ENCODE measurements at regions of chr22 and their contacts with region 1.

Region 1: DNA sequence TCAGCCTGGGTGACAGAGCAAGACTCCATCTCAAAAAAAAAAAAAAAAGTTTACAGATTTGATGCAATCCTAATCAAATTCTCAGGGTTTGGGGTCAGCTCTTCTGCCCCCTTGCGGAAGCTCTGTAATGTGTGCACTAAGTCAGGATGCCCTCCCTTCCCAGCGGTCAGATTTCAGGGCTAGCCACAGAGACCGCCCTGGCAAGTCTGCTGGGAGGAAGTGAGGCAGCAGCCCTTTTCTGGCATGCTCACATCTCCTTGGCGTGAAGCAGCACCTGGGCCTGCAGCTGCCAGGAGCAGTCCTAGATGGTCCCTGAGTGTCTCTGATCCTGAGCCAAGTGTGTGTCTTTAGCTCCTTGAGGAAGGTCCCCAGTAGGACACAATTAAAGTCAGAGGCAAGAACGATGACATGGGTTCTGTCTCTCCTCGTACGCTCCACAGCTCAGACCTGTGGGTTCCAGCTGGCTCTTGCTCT is 10.9 kb upstream of the APOBEC3C start:
- DNase-seq: peak; percentile 88
- ATAC-seq: peak; percentile 96
- H3K4me3 Mint-ChIP-seq: no peak overlapping the region
- H3K27ac Mint-ChIP-seq: no peak overlapping the region
- H3K4me1 Mint-ChIP-seq: peaks cover 6% of the 10 kb centered on the region
- H3K27me3 Mint-ChIP-seq: no peaks in the 10 kb centered on the region

Region 2: GRCh38 chr22:37972527-37972926 is 1030.7 kb before region 1 on chr22:
- CTCF ChIA-PET with region 1: no interaction called
- POLR2A ChIA-PET with region 1: interaction called, 10 read pairs
- intact Hi-C with region 1: no loop called
- DNase-seq: no peak
- ATAC-seq: no peak
- H3K4me3 Mint-ChIP-seq: no peak overlapping the region
- H3K27ac Mint-ChIP-seq: no peak overlapping the region
- H3K4me1 Mint-ChIP-seq: no peaks in the 10 kb centered on the region
- H3K27me3 Mint-ChIP-seq: no peaks in the 10 kb centered on the region

Region 3: GRCh38 chr22:38927033-38927781 is 76.0 kb before region 1 on chr22:
- CTCF ChIA-PET with region 1: interaction called, 7 read pairs
- POLR2A ChIA-PET with region 1: no interaction called
- intact Hi-C with region 1: loop called in 1 of 2 experiments (anchors 1 kb)
- DNase-seq: peak; percentile 78
- ATAC-seq: peak; percentile 86
- H3K4me3 Mint-ChIP-seq: peak overlapping the region; percentile 14
- H3K27ac Mint-ChIP-seq: no peak overlapping the region
- H3K4me1 Mint-ChIP-seq: peaks cover 3% of the 10 kb centered on the region
- H3K27me3 Mint-ChIP-seq: peaks cover 38% of the 10 kb centered on the region

Region 4: GRCh38 chr22:38981992-38982927 is 20.9 kb before region 1 on chr22 and contains the start of gene APOBEC3B:
- CTCF ChIA-PET with region 1: interaction called, 8 read pairs
- POLR2A ChIA-PET with region 1: no interaction called
- intact Hi-C with region 1: loop called in 1 of 2 experiments (anchors 1 kb)
- DNase-seq: peak; percentile 82
- ATAC-seq: peak; percentile 57
- H3K4me3 Mint-ChIP-seq: peak within 1 kb of the TSS; percentile 55
- H3K27ac Mint-ChIP-seq: peak within 1 kb of the TSS; percentile 74
- H3K4me1 Mint-ChIP-seq: peaks cover 53% of the 10 kb centered on the region
- H3K27me3 Mint-ChIP-seq: peaks cover 3% of the 10 kb centered on the region
- total RNA-seq, gene APOBEC3B: 8.0 to 8.5 TPM

Region 5: DNA sequence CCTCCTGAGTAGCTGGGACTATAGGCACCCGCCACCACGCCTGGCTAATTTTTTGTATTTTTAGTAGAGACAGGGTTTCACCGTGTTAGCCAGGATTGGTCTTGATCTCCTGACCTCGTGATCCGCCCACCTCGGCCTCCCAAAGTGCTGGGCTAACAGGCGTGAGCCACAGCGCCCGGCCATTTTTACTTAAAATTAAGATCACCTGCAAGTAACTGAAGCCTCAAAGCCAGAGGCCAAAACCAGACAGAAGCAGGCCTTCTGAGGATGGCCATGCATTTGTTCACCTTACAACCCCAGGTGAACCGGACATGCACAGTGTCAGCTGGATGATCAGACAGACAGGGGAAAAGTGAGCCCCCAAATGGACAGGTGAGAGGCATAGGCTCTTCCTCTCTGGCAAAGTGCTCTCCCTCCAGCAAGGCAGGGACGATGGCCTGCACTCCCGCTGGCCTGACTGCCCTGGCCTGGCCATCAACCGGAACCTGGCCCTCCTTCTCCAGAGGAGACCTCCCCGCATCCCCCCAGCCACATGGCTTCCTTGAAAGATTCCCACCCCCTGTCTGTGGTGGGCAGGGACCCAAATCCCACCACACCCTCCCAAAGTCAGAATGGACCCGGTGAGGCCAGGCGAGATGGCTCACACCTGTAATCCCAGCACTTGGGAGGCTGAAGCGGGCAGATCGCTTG is 119.7 kb after region 1 on chr22:
- CTCF ChIA-PET with region 1: interaction called, 4 read pairs
- POLR2A ChIA-PET with region 1: no interaction called
- intact Hi-C with region 1: loop called (anchors 1 kb)
- DNase-seq: no peak
- ATAC-seq: no peak
- H3K4me3 Mint-ChIP-seq: no peak overlapping the region
- H3K27ac Mint-ChIP-seq: no peak overlapping the region
- H3K4me1 Mint-ChIP-seq: peaks cover 14% of the 10 kb centered on the region
- H3K27me3 Mint-ChIP-seq: no peaks in the 10 kb centered on the region

Measured in activated CD4-positive, alpha-beta T cell treated with anti-CD3 and anti-CD28 coated beads for 36 hours (primary cell).